ENCODE measurements at regions of chr7 and their contacts with region 1.

Region 1: GRCh38 chr7:129091484-129092002 is 36.6 kb upstream of the TNPO3 start:
- DNase-seq: peak; percentile 86
- H3K4me3 ChIP-seq: no peak overlapping the region
- H3K27ac ChIP-seq: peak overlapping the region; percentile 34
- H3K4me1 ChIP-seq: peaks cover 54% of the 10 kb centered on the region
- CTCF ChIP-seq: peak; percentile 100

Region 2: DNA sequence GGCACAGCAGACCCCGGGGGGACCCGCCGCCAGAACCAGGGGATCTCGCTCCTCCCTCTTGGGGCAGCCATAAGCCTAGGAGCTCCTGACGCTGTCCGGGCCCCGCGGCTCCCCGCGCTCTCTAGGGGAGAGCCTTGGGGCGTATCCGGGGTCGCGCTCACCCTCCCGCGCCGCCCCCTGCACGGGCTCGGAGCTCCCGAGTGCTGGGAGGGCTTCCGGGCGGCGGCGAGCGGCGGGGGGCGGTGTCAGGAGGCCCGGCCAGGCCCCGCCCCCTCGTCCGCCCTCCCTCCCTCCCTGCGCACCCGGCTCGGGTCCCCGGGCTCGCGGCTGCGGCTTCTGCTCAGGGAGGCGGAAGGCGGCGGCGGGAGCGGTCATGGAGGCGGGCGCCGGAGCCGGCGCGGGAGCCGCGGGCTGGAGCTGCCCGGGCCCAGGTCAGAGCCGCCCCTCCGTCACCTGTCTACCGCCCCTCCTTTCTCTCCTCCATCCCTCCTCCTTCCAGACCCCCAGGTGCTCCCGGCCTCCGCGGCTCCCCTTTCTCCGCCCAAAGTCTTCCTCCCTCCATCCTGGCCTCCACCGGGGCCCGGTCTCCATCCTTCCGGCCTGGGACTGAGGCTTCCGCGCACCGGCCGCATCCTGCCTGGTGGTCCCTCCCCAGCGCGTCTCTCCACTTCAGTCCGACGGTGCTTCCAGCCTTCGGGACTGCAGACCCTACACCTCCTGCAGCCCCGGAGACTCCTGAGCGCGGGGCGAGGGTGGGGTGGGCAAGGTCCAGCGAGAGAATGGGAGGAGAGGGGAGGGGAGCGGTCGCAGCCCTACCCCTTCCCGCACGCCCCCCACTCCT is 300.2 kb before region 1 on chr7:
- CTCF ChIA-PET with region 1: no interaction called
- POLR2A ChIA-PET with region 1: no interaction called
- intact Hi-C with region 1: loop called (anchors 5 kb)
- DNase-seq: peak; percentile 86
- H3K4me3 ChIP-seq: peak overlapping the region; percentile 77
- H3K27ac ChIP-seq: no peak overlapping the region
- H3K4me1 ChIP-seq: peaks cover 16% of the 10 kb centered on the region
- CTCF ChIP-seq: no peak

Region 3: GRCh38 chr7:128862571-128863432 is 228.7 kb before region 1 on chr7 and contains the start of gene ATP6V1F:
- CTCF ChIA-PET with region 1: no interaction called
- POLR2A ChIA-PET with region 1: interaction called, 4 read pairs
- intact Hi-C with region 1: loop called (anchors 1 kb)
- DNase-seq: peak; percentile 98
- H3K4me3 ChIP-seq: peak within 1 kb of the TSS; percentile 83
- H3K27ac ChIP-seq: peak within 1 kb of the TSS; percentile 36
- H3K4me1 ChIP-seq: peaks cover 30% of the 10 kb centered on the region
- CTCF ChIP-seq: no peak
- total RNA-seq, gene ATP6V1F: 84.9 and 108 TPM in 2 replicates

Region 4: DNA sequence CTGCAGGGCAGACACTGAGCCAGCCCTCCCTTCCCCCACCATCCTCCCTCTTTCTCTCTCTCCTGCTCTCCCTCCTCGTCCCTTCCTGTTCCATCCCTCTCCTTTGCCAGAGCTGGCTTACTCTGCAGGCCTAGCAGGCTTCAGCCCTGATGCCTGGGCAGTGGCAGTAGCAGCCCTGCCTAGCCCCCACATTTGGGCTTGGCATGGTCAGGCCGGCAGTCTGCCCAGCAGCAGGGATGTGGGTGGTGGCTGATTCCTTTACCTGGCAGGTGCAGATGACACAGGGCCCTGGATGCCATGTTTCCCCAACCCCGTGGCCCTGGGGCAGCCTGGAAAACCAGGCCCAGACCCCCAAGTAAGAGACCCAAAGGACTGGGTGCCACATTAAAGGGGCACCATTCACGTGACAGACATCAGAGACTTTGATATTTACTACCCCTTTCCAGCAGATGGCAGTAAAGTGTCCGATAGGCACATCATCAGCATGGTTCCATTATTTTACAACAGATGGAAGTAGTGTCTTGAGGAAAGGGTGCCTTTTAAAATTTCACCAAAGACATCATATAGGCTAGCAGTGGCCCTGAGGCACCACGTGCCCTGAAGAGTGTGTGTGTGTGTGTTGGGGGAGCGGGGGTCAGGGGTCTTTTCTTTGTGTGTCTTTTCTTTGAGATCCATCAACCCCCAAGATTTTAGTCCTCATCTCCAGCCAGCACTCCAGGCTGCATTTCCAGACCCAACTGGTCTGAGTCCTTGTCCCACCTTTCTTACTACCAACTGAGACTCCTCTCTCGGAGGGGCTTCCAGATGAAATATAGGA is 187.0 kb before region 1 on chr7:
- CTCF ChIA-PET with region 1: no interaction called
- POLR2A ChIA-PET with region 1: no interaction called
- intact Hi-C with region 1: loop called (anchors 1 kb)
- DNase-seq: peak; percentile 85
- H3K4me3 ChIP-seq: no peak overlapping the region
- H3K27ac ChIP-seq: no peak overlapping the region
- H3K4me1 ChIP-seq: peaks cover 5% of the 10 kb centered on the region
- CTCF ChIP-seq: peak; percentile 90

Region 5: GRCh38 chr7:128946923-128947830 is 144.4 kb before region 1 on chr7:
- CTCF ChIA-PET with region 1: no interaction called
- POLR2A ChIA-PET with region 1: no interaction called
- intact Hi-C with region 1: no loop called
- DNase-seq: no peak
- H3K4me3 ChIP-seq: no peak overlapping the region
- H3K27ac ChIP-seq: no peak overlapping the region
- H3K4me1 ChIP-seq: no peaks in the 10 kb centered on the region
- CTCF ChIP-seq: peak; percentile 60

Region 6: DNA sequence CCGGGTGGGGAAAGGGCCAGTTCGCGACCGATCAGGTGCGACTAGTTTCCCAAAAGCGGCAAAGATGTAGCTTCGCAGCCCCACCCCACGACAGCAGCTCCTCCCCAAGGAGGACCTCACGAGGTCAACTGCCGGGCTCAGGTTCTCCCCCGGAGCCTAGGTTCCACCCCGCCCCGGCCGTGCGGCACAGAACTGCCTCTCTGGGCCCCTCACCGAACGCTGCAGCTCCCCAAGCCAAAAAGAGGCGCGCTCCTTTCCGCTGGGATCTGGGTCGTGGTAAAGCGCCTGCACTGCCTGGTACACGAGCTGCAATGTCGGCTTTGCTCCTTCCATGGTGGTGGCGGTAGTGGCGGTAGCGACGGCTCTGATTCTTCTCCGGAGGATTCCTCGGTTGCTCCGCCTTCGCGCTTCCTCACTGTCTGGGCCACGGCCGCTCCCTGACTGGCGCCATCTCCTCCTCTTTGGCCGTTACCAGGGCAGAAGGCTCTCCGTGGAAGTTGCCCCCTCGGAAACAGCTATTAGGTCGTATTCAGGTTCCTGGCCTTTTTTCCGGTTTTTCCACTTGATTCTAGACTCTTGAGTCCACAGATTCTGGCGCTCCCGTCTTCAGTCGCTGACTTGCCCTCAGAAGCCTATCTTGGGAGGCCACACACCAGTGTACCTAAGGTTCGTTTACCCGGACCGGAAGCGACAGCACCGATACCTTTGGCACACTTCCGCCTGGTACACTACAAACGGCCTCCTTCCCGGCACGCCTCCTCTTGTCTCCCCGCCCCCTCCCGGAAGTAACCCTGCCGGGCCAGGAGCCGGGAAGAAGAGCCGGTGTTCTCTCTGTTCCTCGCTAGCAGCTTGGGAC is 36.9 kb before region 1 on chr7 and contains the start of gene TNPO3:
- CTCF ChIA-PET with region 1: no interaction called
- POLR2A ChIA-PET with region 1: interaction called, 5 read pairs
- intact Hi-C with region 1: loop called (anchors 2 kb)
- DNase-seq: peak; percentile 95
- H3K4me3 ChIP-seq: peak within 1 kb of the TSS; percentile 95
- H3K27ac ChIP-seq: peak within 1 kb of the TSS; percentile 88
- H3K4me1 ChIP-seq: peaks cover 36% of the 10 kb centered on the region
- CTCF ChIP-seq: peak; percentile 36; the same call in 1 of the 2 replicates
- total RNA-seq, gene TNPO3: 51.4 and 55.1 TPM in 2 replicates

Region 7: GRCh38 chr7:129072479-129073011 is 19.0 kb before region 1 on chr7:
- CTCF ChIA-PET with region 1: no interaction called
- POLR2A ChIA-PET with region 1: no interaction called
- intact Hi-C with region 1: no loop called
- DNase-seq: no peak
- H3K4me3 ChIP-seq: no peak overlapping the region
- H3K27ac ChIP-seq: no peak overlapping the region
- H3K4me1 ChIP-seq: no peaks in the 10 kb centered on the region
- CTCF ChIP-seq: no peak

Region 8: GRCh38 chr7:129126314-129126713 is 34.8 kb after region 1 on chr7:
- CTCF ChIA-PET with region 1: no interaction called
- POLR2A ChIA-PET with region 1: no interaction called
- intact Hi-C with region 1: no loop called
- DNase-seq: no peak
- H3K4me3 ChIP-seq: no peak overlapping the region
- H3K27ac ChIP-seq: no peak overlapping the region
- H3K4me1 ChIP-seq: no peaks in the 10 kb centered on the region
- CTCF ChIP-seq: no peak

Region 9: DNA sequence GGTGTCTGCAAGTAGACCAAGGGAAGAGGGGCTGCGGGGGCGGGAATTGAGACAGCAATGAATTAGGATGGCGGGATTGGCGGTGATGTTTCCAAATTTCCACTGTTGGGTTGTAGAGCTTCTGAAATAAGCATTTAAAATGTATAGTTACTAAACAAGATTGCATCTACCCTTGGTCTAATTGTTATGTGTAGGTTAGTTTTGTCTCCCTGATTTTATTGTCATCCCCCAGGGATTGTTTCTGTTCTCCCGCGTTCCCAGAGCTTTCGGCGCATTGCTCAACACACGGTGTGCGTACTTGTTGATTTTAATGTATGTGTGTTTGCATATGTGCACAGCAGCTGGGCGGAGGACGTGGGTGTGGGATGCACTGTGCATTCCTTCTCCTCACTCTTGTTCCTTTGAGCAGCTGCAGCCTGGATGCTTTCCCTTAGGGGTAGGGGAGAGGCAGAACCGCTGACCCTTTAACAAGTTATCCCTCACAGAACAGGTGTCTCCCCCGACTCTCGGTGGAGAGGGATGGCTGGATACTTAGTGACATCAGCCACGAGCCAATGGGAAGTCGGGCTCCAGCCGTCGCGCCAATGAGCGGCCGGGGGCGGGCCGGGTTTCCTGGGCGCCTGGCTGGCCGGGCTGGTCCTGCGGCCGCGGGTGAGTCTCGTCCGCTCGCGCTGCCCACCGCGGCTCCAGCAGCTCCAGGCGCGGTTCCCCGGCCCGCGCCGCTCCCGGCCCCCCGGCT is 52.7 kb after region 1 on chr7 and contains the start of gene TSPAN33:
- CTCF ChIA-PET with region 1: interaction called, 3 read pairs
- POLR2A ChIA-PET with region 1: no interaction called
- intact Hi-C with region 1: loop called (anchors 2 kb)
- DNase-seq: peak; percentile 78
- H3K4me3 ChIP-seq: peak within 1 kb of the TSS; percentile 76
- H3K27ac ChIP-seq: peak within 1 kb of the TSS; percentile 60
- H3K4me1 ChIP-seq: peaks cover 38% of the 10 kb centered on the region
- CTCF ChIP-seq: no peak
- total RNA-seq, gene TSPAN33: 11.5 and 14.6 TPM in 2 replicates

Region 10: DNA sequence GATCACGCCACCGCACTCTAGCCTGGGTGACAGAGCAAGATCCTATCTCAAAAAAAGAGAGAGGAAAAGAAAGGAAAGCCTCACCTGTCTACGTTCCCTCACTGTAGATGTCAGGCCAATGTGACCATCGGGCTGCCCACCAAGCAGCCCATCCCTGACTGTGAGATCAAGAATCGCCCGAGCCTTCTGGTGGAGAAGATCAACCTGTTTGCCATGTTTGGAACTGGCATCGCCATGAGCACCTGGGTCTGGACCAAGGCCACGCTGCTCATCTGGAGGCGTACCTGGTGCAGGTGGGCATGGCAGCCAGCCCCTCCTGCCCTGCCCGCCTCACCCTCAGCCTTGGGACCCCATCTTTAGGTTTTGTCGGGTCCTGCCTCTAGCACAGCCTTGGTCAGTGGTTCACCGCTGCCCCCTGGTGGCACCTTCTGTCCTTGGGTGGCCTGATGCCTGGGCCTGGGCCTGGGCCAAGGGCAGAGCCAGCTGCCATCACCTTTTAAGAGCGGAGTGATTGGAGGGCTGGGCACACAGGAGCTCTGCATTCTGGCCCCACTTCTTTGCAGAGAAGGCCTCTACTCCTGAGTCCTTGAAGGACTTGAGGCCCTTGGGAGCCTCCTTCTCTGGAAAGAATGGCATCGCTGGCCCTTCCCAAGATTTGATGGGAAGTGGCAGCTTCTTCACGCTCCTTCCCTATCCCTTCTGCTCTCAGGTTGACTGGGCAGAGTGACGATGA is 118.9 kb after region 1 on chr7:
- CTCF ChIA-PET with region 1: no interaction called
- POLR2A ChIA-PET with region 1: interaction called, 4 read pairs
- intact Hi-C with region 1: loop called (anchors 2 kb)
- DNase-seq: peak; percentile 74
- H3K4me3 ChIP-seq: no peak overlapping the region
- H3K27ac ChIP-seq: no peak overlapping the region
- H3K4me1 ChIP-seq: peaks cover 5% of the 10 kb centered on the region
- CTCF ChIP-seq: peak; percentile 83

Region 11: DNA sequence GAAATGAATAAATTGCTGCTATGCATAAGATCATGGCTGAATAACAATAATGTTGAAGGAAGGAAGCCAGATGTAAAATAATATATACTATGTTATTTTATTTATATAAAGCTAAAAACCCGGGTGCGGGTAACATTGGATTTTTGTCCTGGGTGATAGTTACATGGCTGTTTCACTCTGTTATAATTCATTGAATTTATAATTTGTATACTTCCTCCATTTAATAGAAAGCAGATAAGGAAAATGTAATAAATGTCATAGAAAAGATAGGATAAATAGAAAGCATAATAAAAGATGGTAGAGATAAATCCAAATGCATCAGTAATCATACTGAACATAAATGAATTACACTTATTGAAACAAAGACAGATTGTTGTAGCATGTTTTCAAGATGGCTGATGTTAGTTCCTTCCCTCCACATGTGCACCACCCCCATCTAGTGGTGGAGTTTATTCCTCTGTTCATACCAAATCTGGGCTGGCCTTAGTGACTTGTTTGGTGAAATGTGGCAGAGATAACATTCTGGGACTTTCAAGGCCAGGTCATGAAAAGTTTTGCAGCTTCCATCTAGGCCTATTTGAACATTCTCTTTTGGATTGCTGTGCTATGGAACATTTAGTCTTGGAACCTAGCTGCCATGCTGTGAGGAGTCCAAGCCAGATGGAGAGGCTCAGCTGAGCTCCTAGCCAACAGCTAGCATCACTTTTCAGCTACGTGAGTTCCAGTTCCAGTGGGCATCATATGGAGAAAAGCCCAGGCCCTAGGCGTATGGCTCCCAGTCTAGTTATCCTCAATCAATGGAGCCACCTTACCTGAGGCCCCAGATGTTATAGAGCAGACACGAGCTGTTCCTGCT is 180.2 kb after region 1 on chr7:
- CTCF ChIA-PET with region 1: no interaction called
- POLR2A ChIA-PET with region 1: no interaction called
- intact Hi-C with region 1: no loop called
- DNase-seq: peak; percentile 67
- H3K4me3 ChIP-seq: no peak overlapping the region
- H3K27ac ChIP-seq: no peak overlapping the region
- H3K4me1 ChIP-seq: no peaks in the 10 kb centered on the region
- CTCF ChIP-seq: peak; percentile 91